Activated T-helper 1 cell treated with anti-CD3 and anti-CD28 coated beads, Interleukin-12 subunit alpha, Interleukin-12 subunit beta, Interleukin-2, Interleukin-4 antibody, amounts not matched to agents 30 ng/mL and 10 ng/mL and 1 ng/mL, durations not matched to agents 14 hours and 24 hours and 36 hours (primary cell): ENCODE measurements at regions of chr7 and their contacts with region 1.

Region 1: GRCh38 chr7:26090927-26091519 is 61.0 kb upstream of the NFE2L3 start:
- DNase-seq: no peak
- H3K4me3 Mint-ChIP-seq: no peak overlapping the region
- H3K27ac Mint-ChIP-seq: peak overlapping the region; percentile 6
- H3K4me1 Mint-ChIP-seq: peaks cover 22% of the 10 kb centered on the region
- H3K27me3 Mint-ChIP-seq: no peaks in the 10 kb centered on the region

Region 2: DNA sequence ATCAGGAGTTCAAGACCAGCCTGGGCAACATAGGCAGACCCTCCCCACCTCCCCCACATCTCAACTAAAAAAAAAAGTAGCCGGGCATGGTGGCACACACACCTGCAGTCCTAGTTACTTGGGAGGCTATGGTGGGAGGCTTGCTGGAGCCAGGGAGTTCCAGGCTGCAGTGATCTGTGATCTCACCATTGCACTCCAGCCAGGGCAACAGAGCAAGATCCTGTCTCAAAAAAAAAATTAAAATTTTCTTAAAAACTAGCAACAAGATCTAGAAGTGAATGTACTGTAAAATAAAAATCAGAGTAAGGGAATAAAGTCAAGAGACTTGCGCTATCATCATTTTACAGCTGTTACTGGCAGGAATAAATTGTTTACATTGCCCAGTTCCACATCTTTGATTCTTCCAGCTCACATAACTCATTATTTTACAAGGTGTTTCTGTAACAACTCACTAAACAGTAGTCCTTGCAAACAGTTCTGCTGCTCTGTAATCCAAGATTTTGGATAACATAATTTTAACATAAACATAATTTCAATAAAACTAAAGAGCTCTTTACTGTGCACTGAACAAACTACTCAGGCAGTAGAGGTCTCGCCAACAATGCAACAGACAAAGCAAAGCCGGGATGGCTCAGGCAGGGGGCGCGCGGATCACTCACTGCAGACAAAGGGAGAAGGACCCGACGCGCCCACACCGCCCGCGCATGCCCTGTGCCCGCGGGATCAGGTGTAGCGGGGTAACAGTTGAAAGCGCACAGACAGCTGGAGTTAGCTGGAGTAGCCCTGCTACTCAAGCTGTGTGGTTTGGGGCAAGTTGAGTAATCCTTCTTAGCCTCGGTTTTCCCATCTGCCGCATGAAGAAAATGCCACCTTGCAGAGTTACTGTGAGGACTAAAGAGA is 12.3 kb before region 1 on chr7:
- intact Hi-C with region 1: no loop called
- DNase-seq: peak; percentile 66
- H3K4me3 Mint-ChIP-seq: no peak overlapping the region
- H3K27ac Mint-ChIP-seq: no peak overlapping the region
- H3K4me1 Mint-ChIP-seq: peaks cover 9% of the 10 kb centered on the region
- H3K27me3 Mint-ChIP-seq: peaks cover 76% of the 10 kb centered on the region

Region 3: DNA sequence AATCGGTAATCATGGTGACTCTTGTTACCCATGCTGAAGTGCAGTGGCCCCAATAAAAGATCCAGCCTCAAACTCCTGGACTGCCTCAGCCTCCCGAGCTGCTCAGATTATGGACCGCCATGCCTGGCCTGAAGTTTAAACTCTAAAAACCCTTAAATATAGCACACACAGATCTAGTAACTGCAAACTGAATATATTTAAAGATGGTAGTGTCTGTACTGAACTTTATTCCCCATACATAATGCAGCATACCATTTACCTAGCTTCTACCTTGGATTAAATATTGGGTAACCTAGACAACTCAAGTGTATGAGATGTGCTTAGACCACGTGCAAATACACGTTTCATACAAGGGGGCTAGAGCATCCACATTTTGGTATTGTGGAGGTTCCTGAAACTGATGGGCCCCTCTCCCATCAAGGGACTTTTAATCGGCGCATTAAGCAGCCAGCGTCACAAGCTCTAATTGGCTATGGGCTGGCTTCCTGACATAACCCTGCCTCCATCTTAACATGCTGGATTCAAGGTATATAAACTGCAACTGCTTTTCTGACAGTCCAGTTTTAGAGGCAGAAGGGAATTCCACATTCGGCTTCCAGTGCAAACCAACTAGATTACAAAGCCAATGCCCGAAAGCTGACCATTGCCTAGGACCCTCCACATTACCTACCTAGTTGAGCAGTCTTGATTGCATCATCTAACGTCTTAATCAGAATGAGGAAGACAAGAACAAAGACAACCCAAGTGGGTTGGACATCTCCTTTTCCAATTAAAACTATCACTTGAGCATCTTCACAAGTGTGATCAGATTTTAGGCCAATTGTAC is 96.6 kb after region 1 on chr7:
- intact Hi-C with region 1: loop called (anchors 1 kb)
- DNase-seq: no peak
- H3K4me3 Mint-ChIP-seq: no peak overlapping the region
- H3K27ac Mint-ChIP-seq: peak overlapping the region; percentile 76
- H3K4me1 Mint-ChIP-seq: peaks cover 78% of the 10 kb centered on the region
- H3K27me3 Mint-ChIP-seq: no peaks in the 10 kb centered on the region

Region 4: GRCh38 chr7:26284995-26285632 is 194.1 kb after region 1 on chr7:
- intact Hi-C with region 1: loop called (anchors 1 kb)
- DNase-seq: no peak
- H3K4me3 Mint-ChIP-seq: no peak overlapping the region
- H3K27ac Mint-ChIP-seq: no peak overlapping the region
- H3K4me1 Mint-ChIP-seq: peaks cover 6% of the 10 kb centered on the region
- H3K27me3 Mint-ChIP-seq: no peaks in the 10 kb centered on the region

Region 5: GRCh38 chr7:26388256-26388655 is 297.2 kb after region 1 on chr7:
- intact Hi-C with region 1: no loop called
- DNase-seq: no peak
- H3K4me3 Mint-ChIP-seq: no peak overlapping the region
- H3K27ac Mint-ChIP-seq: no peak overlapping the region
- H3K4me1 Mint-ChIP-seq: no peaks in the 10 kb centered on the region
- H3K27me3 Mint-ChIP-seq: peaks cover 47% of the 10 kb centered on the region